ENCODE measurements at regions of chr1 and their contacts with region 1.

Region 1: DNA sequence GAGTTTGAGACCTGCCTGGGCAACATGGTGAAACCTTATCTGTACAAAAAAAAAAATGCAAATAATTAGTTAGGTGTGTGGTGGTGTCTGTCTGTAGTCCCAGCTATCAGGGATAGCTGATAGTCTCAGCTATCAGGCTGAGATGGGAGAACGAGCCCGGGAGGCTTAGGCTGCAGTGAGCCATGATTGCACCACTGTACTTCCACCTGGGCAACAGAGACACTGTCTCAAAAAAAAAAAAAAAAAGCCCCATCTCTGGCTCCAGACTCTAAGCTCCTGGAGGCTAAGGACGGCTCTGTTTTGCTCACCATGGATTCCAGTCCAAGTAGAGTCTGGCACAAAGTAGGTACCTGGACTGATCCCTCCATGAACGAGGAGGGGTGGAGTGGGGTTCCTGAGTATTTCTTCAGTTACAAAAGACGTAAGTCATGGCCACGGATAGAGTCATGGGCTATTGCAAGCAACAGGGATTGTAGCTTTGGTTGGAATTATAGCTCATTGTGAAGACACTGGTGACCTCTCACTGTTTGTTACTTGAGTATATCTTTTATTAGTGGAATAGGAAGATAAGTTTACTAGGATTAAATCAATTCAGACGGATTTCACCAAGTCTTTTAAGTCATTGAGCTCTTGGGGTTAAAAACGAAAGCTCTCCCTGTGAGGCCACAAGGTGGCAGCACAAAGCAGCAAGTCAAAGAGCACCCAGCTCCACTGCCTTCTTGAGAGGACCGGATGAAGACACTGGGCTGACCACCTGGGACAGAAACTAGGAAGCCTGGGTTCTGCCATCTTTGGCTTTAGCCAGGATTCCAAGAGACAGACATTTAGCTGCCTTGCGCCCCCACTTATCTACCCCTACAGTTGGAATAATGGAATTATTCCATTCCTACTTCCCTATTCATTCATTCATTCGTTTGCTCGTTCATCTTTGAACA is 35.6 kb upstream of the TMEM61 start:
- DNase-seq: peak; percentile 72
- H3K4me3 ChIP-seq: no peak overlapping the region
- H3K27ac ChIP-seq: no peak overlapping the region
- H3K4me1 ChIP-seq: peaks cover 0 to under 1% of the 10 kb centered on the region in 2 experiments; a peak in 1 of 4 replicates
- H3K27me3 ChIP-seq: no peaks in the 10 kb centered on the region
- CTCF ChIP-seq: peak; percentile 91
- EP300 ChIP-seq: no peak
- RAD21 ChIP-seq: peak; percentile 82

Region 2: DNA sequence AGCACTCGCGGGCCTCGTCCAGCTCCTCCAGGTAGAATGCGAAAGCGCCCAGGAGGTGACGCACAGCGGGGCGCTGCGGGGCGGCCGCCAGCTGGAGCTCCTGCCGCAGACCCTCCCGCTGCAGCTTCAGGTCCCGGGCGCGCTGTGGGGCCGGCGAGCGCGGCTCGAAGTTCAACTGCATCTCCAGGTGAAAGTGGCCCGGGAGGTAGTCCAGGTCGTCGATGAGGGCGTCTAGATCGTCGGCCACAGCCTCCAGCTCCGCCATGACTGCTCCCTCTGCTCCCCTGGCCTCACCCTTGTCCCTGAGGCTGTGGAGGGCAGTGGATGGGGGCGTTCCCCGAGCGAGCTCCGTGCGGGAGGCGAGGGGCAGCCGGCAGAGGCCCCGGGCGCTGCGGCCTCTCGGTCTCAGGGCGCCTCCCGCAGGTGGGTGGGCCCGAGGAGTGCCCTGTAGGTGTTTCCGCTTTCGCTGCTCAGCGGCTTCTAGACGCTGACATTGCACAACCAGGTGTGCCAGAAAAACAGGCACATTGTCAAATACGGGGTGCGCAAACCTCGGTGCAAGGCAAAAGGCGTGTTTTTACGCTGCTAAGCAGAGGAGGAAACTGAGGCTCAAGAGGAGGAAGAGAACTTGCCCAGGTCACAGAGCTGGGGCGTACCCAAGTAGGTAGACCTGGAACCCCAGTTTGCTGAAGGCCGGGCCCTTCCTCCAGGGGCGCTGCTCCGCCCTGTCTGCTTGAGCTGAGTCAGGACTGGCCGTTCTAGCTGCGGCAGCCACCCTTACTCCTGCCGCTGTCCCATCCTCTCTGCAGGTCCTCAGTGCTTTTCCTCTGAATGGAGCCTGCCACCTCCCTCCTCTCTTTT is 143.7 kb before region 1 on chr1 and contains the start of gene TTC22:
- CTCF ChIA-PET with region 1: no interaction called
- POLR2A ChIA-PET with region 1: no interaction called
- DNase-seq: no peak
- H3K4me3 ChIP-seq: no peak within 1 kb of the TSS
- H3K27ac ChIP-seq: no peak within 1 kb of the TSS
- H3K4me1 ChIP-seq: no peaks in the 10 kb centered on the region; a peak in 1 of 4 replicates
- H3K27me3 ChIP-seq: no peaks in the 10 kb centered on the region
- CTCF ChIP-seq: no peak
- EP300 ChIP-seq: no peak
- RAD21 ChIP-seq: no peak
- polyA plus RNA-seq, gene TTC22: not detected in 2 replicates

Region 3: DNA sequence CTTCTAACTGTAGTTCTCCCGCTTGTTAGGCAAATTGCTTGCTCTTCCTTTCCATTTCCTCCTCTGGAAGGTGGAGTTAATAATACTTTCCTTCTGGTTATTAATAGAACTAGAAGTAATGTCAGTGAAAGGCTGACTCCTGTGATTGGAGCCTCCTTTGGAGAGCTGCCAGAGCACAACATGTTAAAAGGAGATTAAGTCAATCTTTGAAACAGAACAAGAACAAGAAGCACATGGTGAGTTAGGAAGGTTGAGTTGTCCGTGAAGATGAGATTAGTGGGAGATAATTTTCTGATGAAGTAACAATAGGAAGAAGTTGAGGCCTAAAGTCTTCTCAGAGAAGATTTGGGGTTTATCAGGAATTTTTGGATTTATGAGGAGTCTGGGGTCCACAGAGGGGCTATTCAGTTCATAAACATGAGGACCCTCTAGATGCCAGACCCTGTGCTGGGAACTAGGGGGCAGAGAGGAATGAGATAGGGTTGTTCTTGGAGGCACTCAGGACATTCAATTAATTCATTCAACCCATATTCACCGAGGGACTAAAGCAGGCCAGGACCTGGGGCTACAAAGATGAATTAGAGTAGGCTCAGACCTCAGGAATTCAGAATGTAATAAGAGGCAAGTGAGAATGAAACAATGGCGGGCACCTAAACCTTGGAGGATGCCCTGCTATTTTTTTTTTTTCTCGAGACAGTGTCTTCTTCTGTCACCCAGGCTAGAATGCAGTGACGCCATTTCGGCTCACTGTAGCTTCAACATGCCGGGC is 17.2 kb before region 1 on chr1:
- CTCF ChIA-PET with region 1: interaction called, 36 read pairs
- POLR2A ChIA-PET with region 1: no interaction called
- DNase-seq: no peak
- H3K4me3 ChIP-seq: no peak overlapping the region
- H3K27ac ChIP-seq: peak overlapping the region in 1 of 2 experiments; percentile 52; a peak in 2 of 4 replicates
- H3K4me1 ChIP-seq: peaks cover 0 to 20% of the 10 kb centered on the region in 2 experiments; a peak in 2 of 4 replicates
- H3K27me3 ChIP-seq: no peaks in the 10 kb centered on the region
- CTCF ChIP-seq: no peak
- EP300 ChIP-seq: no peak
- RAD21 ChIP-seq: no peak

Region 4: GRCh38 chr1:54959241-54959640 is 14.4 kb after region 1 on chr1:
- CTCF ChIA-PET with region 1: interaction called, 68 read pairs
- POLR2A ChIA-PET with region 1: no interaction called
- DNase-seq: no peak
- H3K4me3 ChIP-seq: no peak overlapping the region
- H3K27ac ChIP-seq: no peak overlapping the region
- H3K4me1 ChIP-seq: no peaks in the 10 kb centered on the region
- H3K27me3 ChIP-seq: no peaks in the 10 kb centered on the region
- CTCF ChIP-seq: no peak
- EP300 ChIP-seq: no peak
- RAD21 ChIP-seq: no peak

Region 5: DNA sequence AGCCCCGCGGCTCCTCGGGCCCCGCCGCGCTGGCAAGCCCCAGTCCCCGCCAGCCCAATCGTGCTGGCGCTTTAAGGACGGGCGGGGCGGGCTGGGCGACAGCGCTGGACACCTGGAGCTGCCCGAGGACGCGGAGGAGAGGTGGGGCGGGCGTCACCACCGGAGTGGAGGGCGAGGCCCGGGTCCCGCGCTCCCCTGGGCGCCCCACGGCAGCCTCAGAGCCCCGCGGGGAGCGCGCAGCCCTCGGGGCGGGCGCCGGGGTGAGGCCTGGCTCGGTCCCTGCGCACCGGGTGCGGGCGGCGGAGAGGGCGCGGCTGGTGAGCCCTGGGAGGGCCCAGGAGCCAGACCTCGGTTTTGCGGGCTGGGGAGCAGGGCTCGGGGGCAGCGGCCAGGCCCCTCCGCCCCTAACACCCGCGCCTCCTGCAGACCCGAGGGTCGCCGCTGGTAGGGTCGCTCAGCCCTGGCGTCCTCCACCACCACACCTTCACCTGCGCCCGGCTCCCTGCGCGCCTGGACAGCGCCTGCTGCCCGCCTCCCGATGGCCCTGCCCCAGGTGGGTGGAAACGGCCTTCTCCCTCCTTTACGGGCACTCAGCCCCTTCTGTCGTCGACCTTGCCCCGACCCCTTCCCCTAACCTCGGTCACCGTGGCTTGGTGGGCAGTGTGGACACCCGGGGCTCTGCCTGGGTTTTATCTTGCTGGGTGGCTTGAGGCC is 35.8 kb after region 1 on chr1 and contains the start of gene TMEM61:
- CTCF ChIA-PET with region 1: interaction called, 123 read pairs
- POLR2A ChIA-PET with region 1: no interaction called
- DNase-seq: peak; percentile 73
- H3K4me3 ChIP-seq: peak within 1 kb of the TSS in 1 of 2 experiments; percentile 40; a peak in 2 of 4 replicates
- H3K27ac ChIP-seq: no peak within 1 kb of the TSS
- H3K4me1 ChIP-seq: no peaks in the 10 kb centered on the region; a peak in 1 of 4 replicates
- H3K27me3 ChIP-seq: no peaks in the 10 kb centered on the region; the same call in 1 of the 2 replicates
- CTCF ChIP-seq: no peak
- EP300 ChIP-seq: no peak
- RAD21 ChIP-seq: no peak
- polyA plus RNA-seq, gene TMEM61: not detected in 2 replicates

Region 6: DNA sequence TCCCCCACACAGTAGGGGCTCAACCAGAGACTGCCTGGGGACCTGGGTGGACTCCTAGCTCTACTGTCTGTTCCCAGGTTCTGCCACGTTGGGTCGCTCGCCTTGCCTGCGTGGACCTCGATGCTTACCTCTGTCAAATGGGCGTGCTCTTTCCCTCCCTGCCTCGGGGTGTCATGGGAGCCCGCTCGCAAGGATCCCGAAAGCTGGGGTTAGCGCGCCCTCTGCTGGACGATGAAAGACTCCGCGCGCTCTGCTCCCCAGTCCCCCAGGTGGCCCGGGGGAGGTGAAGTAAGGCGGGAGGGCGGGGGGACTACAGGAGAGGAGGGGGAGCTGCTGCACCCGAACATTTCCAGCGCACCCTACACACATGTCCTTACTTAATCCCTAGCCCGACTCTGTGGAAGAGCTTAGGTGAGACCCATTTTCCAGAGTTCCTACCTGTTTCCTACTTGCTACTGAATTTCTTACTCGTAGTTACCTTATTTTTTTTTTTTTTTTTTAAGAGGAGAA is 51.5 kb after region 1 on chr1:
- CTCF ChIA-PET with region 1: interaction called, 302 read pairs
- POLR2A ChIA-PET with region 1: interaction called, 3 read pairs
- DNase-seq: peak; percentile 96
- H3K4me3 ChIP-seq: peak overlapping the region in 1 of 2 experiments; percentile 49; a peak in 1 of 4 replicates
- H3K27ac ChIP-seq: no peak overlapping the region
- H3K4me1 ChIP-seq: peaks cover 0 to 3% of the 10 kb centered on the region in 2 experiments; a peak in 1 of 4 replicates
- H3K27me3 ChIP-seq: no peaks in the 10 kb centered on the region; the same call in 1 of the 2 replicates
- CTCF ChIP-seq: peak; percentile 87
- EP300 ChIP-seq: no peak
- RAD21 ChIP-seq: peak; percentile 86